MCF 10A (cell line): ENCODE measurements at regions of chr3 and their contacts with region 1.

Region 1: DNA sequence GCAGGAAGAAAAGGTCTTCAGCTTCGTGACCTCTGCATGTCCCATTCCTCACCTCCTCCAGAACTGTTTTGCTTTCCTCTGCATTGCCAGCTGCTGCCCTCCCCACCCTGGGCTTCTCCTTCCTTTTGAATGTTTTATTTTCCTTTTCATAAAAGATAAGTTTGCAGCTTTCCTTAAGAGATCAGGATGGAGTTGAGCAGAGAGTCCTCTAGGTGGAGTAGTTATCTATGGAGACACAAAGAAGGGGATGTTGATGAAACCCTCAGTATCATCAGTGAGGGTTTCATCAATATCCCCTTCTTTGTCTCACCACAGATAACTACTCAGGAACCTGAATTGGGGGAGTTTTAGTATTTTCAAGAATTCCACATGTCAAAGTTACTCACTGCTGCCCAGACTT is 19.0 kb upstream of the SLC25A36 start:
- DNase-seq: no peak
- H3K4me3 Mint-ChIP-seq: no peak overlapping the region
- H3K27ac Mint-ChIP-seq: no peak overlapping the region
- H3K4me1 Mint-ChIP-seq: no peaks in the 10 kb centered on the region
- H3K27me3 Mint-ChIP-seq: peaks cover 32% of the 10 kb centered on the region
- CTCF ChIP-seq: peak; percentile 31

Region 2: DNA sequence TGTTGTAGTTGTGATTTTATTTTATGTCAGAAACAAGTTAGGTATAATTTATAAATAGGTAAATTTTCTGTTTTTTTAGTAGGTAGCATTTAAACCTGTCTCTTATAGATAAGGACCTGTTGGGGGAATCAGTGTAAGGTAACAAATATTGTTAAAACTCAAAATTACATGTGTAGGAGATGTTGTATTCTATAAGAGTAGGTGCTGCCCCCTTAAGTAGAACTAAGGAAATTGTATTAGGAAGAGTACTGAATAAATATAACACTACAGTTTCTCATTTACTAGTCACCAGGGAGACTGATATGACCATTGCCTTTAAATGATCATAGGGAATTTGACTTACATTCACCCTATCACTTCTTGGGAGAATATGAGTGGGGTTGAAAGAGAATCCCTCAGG is 50.2 kb after region 1 on chr3:
- CTCF ChIA-PET with region 1: interaction called, 8 read pairs
- POLR2A ChIA-PET with region 1: no interaction called
- intact Hi-C with region 1: loop called (anchors 10 kb)
- DNase-seq: peak; percentile 27
- H3K4me3 Mint-ChIP-seq: no peak overlapping the region
- H3K27ac Mint-ChIP-seq: peak overlapping the region; percentile 64
- H3K4me1 Mint-ChIP-seq: no peaks in the 10 kb centered on the region
- H3K27me3 Mint-ChIP-seq: no peaks in the 10 kb centered on the region
- CTCF ChIP-seq: peak; percentile 15